ENCODE measurements at regions of chr1 and their contacts with region 1.

Region 1: DNA sequence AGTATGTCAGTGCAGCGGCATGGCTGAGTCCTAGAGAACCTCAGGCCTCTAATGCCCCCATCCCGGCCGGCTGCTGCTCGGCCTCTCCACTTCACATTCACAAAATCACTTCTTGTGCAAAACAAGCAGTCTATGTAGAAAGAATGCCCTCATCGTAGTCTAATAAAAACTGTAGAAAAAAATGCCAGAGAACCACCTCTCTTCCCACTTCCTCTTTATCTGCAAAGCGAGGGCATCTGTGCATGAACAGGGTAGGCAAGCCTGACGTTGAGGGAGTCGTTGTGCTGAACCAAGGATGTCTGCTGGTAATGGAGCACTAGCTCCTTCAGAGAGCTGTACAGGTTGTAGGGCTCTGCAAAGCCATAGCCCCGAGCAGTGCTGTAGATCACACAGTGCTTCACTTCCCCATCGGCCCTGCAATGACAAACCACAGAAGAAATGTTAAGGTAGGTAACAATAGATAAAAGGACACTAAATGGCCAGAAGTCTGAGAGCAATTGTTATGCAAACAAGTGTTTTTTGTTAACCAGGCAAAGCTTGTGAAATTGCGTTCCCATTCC is 88.9 kb downstream of the PIK3R3 start:
- DNase-seq: no peak
- H3K4me3 ChIP-seq: no peak overlapping the region
- CTCF ChIP-seq: no peak

Region 2: DNA sequence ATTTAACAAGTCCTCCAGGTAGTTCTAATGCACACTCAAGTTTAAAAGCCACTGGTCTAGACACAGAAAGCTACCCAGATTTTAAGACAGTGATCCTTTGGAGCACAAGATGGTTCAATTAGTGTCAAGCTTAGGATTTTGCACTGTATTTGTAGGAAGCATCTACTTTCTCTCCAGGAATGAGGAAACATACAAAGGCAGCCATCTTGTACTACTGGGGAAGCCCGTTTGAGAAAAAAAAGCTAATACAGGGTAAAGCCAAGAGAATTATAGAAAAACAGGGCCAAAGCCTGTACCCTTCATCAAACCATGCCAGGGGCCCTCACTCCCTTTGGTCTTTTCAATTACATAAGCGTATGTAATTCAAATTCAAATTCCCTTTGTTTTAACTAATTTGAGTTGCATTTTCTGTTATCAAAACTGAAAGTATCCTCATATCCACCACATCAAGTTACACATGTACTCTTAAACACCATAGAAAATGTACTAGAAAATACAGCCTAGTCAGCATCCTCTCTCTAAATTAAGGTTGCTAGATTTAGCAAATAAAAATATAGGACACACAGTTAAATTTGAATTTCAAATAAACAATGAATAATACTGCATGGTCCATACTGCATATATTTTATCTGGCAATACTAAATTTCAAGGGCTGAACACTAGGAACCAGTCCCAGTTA is 71.5 kb after region 1 on chr1:
- in situ Hi-C with region 1: loop called (anchors 5 kb)
- DNase-seq: no peak
- H3K4me3 ChIP-seq: no peak overlapping the region
- CTCF ChIP-seq: no peak

Region 3: GRCh38 chr1:46197964-46198811 is 154.7 kb after region 1 on chr1 and contains the start of gene POMGNT1:
- in situ Hi-C with region 1: no loop called
- DNase-seq: no peak
- H3K4me3 ChIP-seq: peak within 1 kb of the TSS; percentile 87
- CTCF ChIP-seq: no peak